GM12878 (cell line): ENCODE measurements at regions of chr6 and their contacts with region 1.

Region 1: DNA sequence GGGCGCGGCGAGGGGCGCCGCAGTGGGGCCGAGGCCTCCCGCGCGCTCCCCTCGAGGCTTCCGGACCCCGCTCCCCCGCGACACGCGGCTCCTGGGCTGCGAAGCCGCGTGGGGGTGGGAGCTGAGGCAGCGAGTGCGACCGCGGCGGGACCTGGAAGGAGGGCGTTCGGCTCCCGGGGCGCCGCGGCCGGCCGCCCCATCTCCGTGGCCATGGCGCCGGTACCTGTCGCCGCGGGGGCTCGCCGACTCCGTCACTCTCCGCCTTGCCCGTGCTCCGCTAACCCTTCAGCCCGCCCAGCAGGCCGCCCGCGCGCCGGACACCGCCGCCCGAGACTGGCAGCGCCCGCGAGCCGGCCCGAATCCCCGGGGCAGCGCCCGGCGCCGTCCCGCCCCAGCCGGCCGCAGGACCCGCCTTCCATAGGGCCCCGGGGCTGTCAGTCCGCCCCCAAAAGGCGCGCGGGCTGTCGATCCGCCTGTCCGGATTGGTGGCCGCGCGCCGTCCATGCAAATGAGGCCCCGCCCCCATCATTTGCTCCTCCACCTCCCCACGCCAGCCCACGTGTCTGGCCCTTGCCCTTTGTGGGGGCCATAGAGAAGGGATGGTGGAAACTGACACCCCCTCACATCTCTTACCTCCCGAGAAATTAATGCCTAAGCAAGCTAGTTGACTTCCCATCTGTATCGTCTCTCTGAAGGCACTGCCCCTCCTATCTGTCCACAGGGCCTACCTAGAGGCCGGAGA is at the start of gene FKBP5:
- DNase-seq: peak; percentile 56
- ATAC-seq: peak; percentile 95
- H3K4me3 ChIP-seq: peak within 1 kb of the TSS; percentile 79
- H3K27ac ChIP-seq: peak within 1 kb of the TSS; percentile 62
- H3K4me1 ChIP-seq: peaks cover 5% of the 10 kb centered on the region
- H3K27me3 ChIP-seq: no peaks in the 10 kb centered on the region
- CTCF ChIP-seq: no peak
- EP300 ChIP-seq: no peak
- POLR2A ChIP-seq: peak; percentile 92
- RAD21 ChIP-seq: no peak
- polyA plus RNA-seq, gene FKBP5: 29.0 to 33.5 TPM

Region 2: GRCh38 chr6:35008853-35009252 is 679.9 kb before region 1 on chr6:
- CTCF ChIA-PET with region 1: no interaction called
- POLR2A ChIA-PET with region 1: no interaction called
- RAD21 ChIA-PET with region 1: no interaction called
- SMC1A ChIA-PET with region 1: no interaction called
- in situ Hi-C with region 1: no loop called
- intact Hi-C with region 1: no loop called
- DNase-seq: no peak
- ATAC-seq: no peak
- H3K4me3 ChIP-seq: no peak overlapping the region
- H3K27ac ChIP-seq: no peak overlapping the region
- H3K4me1 ChIP-seq: no peaks in the 10 kb centered on the region
- H3K27me3 ChIP-seq: no peaks in the 10 kb centered on the region
- CTCF ChIP-seq: no peak
- EP300 ChIP-seq: no peak
- POLR2A ChIP-seq: no peak
- RAD21 ChIP-seq: no peak

Region 3: DNA sequence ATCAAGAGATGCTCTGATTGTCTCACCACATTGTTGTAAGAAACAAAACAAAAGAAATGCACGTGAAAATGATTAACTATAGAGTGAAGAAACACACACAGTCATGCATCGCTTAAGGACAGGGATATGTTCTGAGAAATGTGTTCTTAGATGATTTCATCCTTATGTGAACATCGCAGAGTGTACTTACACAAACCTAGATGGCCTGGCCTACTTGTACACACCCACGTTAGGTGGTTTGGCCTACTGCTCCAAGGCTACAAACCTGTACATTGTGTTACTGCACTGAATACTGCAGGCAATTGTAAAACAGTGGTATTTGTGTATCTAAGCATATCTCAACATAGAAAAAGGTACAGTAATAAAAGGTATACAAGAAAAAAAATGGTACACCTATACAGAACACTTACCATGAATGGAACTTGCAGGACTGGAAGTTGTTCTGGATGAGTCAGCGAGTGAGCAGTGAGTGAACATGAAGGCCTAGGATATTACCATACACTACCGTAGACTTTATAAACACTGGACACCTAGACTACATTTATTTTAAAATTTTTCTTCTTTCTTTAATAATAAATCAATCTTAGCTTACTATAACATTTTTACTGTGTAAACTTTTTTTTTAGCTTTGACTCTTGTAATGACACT is 48.6 kb before region 1 on chr6:
- CTCF ChIA-PET with region 1: no interaction called
- POLR2A ChIA-PET with region 1: no interaction called
- RAD21 ChIA-PET with region 1: no interaction called
- SMC1A ChIA-PET with region 1: interaction called, 12 read pairs
- in situ Hi-C with region 1: no loop called
- intact Hi-C with region 1: no loop called
- DNase-seq: no peak
- ATAC-seq: no peak
- H3K4me3 ChIP-seq: no peak overlapping the region
- H3K27ac ChIP-seq: no peak overlapping the region
- H3K4me1 ChIP-seq: peaks cover 5% of the 10 kb centered on the region
- H3K27me3 ChIP-seq: no peaks in the 10 kb centered on the region
- CTCF ChIP-seq: no peak
- EP300 ChIP-seq: no peak
- POLR2A ChIP-seq: no peak
- RAD21 ChIP-seq: no peak

Region 4: GRCh38 chr6:35669451-35670045 is 19.2 kb before region 1 on chr6:
- CTCF ChIA-PET with region 1: interaction called, 9 read pairs
- POLR2A ChIA-PET with region 1: interaction called, 40 read pairs
- RAD21 ChIA-PET with region 1: interaction called, 20 read pairs
- SMC1A ChIA-PET with region 1: interaction called, 69 read pairs
- in situ Hi-C with region 1: no loop called
- intact Hi-C with region 1: no loop called
- DNase-seq: no peak
- ATAC-seq: peak; percentile 79
- H3K4me3 ChIP-seq: peak overlapping the region; percentile 52; the same call in 1 of the 2 replicates
- H3K27ac ChIP-seq: peak overlapping the region; percentile 89
- H3K4me1 ChIP-seq: peaks cover 16% of the 10 kb centered on the region
- H3K27me3 ChIP-seq: no peaks in the 10 kb centered on the region
- CTCF ChIP-seq: no peak
- EP300 ChIP-seq: no peak
- POLR2A ChIP-seq: no peak
- RAD21 ChIP-seq: no peak

Region 5: GRCh38 chr6:35678021-35678654 is 10.6 kb before region 1 on chr6:
- CTCF ChIA-PET with region 1: interaction called, 9 read pairs
- POLR2A ChIA-PET with region 1: interaction called, 12 read pairs
- RAD21 ChIA-PET with region 1: interaction called, 7 read pairs
- SMC1A ChIA-PET with region 1: interaction called, 17 read pairs
- in situ Hi-C with region 1: no loop called
- intact Hi-C with region 1: no loop called
- DNase-seq: no peak
- ATAC-seq: no peak
- H3K4me3 ChIP-seq: no peak overlapping the region
- H3K27ac ChIP-seq: no peak overlapping the region
- H3K4me1 ChIP-seq: peaks cover 6% of the 10 kb centered on the region
- H3K27me3 ChIP-seq: no peaks in the 10 kb centered on the region
- CTCF ChIP-seq: no peak
- EP300 ChIP-seq: no peak
- POLR2A ChIP-seq: no peak
- RAD21 ChIP-seq: no peak

Region 6: GRCh38 chr6:35719830-35720733 is 31.3 kb after region 1 on chr6:
- CTCF ChIA-PET with region 1: interaction called, 5 read pairs
- POLR2A ChIA-PET with region 1: interaction called, 13 read pairs
- RAD21 ChIA-PET with region 1: interaction called, 21 read pairs
- SMC1A ChIA-PET with region 1: interaction called, 24 read pairs
- in situ Hi-C with region 1: no loop called
- intact Hi-C with region 1: no loop called
- DNase-seq: peak; percentile 70
- ATAC-seq: peak; percentile 80
- H3K4me3 ChIP-seq: peak overlapping the region; percentile 49; the same call in 1 of the 2 replicates
- H3K27ac ChIP-seq: peak overlapping the region; percentile 76
- H3K4me1 ChIP-seq: peaks cover 41% of the 10 kb centered on the region
- H3K27me3 ChIP-seq: no peaks in the 10 kb centered on the region
- CTCF ChIP-seq: no peak
- EP300 ChIP-seq: peak in 1 of 2 experiments; percentile 79; a peak in 2 of 4 replicates
- POLR2A ChIP-seq: no peak; the same call in 1 of the 2 replicates
- RAD21 ChIP-seq: no peak